ENCODE measurements at regions of chr18 and their contacts with region 1.

Region 1: GRCh38 chr18:12947355-12948041 is at the start of gene SEH1L:
- DNase-seq: peak; percentile 100
- H3K4me3 ChIP-seq: peak within 1 kb of the TSS; percentile 95
- H3K27ac ChIP-seq: peak within 1 kb of the TSS; percentile 96
- H3K4me1 ChIP-seq: peaks cover 36% of the 10 kb centered on the region
- H3K27me3 ChIP-seq: no peaks in the 10 kb centered on the region
- total RNA-seq, gene SEH1L: 30.2 and 36.5 TPM in 2 replicates

Region 2: GRCh38 chr18:12376718-12377555 is 570.6 kb before region 1 on chr18 and contains the start of gene AFG3L2:
- in situ Hi-C with region 1: loop called (anchors 25 kb)
- DNase-seq: peak; percentile 77
- H3K4me3 ChIP-seq: peak within 1 kb of the TSS; percentile 87
- H3K27ac ChIP-seq: peak within 1 kb of the TSS; percentile 92
- H3K4me1 ChIP-seq: peaks cover 10% of the 10 kb centered on the region; the same call in 1 of the 2 replicates
- H3K27me3 ChIP-seq: no peaks in the 10 kb centered on the region
- total RNA-seq, gene AFG3L2: 40.6 and 52.2 TPM in 2 replicates

Measured in GM23248 (cell line).